Naive thymus-derived CD4-positive, alpha-beta T cell (primary cell): ENCODE measurements at regions of chr2 and their contacts with region 1.

Region 1: DNA sequence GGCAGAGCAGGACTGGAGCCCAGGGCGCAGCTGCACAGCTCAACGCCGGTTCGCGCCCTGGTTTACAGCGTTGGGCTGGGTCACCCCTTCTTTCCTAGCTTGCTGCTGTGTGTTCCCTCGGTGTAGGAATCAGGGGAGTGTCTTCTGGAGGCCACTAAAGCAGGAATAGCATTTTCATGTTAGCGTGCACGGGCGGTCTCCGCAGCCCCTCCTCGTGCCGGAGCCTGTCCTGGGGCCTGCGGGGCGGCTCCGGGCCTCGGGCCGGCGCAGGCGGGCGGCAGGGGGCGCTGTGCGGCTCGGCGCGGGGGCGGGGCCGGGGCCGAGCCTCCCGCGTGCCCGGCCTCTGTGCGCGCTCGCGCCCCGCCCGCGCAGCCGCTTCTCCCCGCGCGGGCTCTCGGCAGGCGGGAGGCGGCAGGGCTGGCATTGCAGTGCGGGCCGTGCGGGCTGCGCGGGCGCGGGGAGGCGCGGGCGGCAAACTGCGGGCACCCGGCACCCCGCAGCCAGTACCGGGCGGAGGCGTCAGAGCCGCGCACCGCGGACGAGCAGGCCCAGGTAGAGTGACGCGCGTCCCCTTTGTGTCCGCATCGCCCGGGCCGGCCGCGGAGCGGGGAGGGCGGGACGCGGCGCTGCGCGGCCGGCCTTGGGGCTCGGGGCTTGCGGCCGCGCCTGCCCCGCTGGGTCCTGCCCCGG is at the start of gene RNF144A:
- DNase-seq: peak; percentile 63 to 91 (median 79)
- ATAC-seq: peak; percentile 95
- H3K4me3 ChIP-seq: peak within 1 kb of the TSS; percentile 61
- H3K4me3 Mint-ChIP-seq: peak within 1 kb of the TSS; percentile 78 to 87 (median 80)
- H3K27ac ChIP-seq: peak within 1 kb of the TSS; percentile 76
- H3K27ac Mint-ChIP-seq: peak within 1 kb of the TSS; percentile 20 to 99 (median 78)
- H3K4me1 ChIP-seq: peaks cover 25 to 80% of the 10 kb centered on the region in 2 donors
- H3K4me1 Mint-ChIP-seq: peaks cover 41 to 84% (median 77%) of the 10 kb centered on the region in 7 donors
- H3K27me3 ChIP-seq: no peaks in the 10 kb centered on the region
- H3K27me3 Mint-ChIP-seq: peaks cover 0 to 18% (median 0%) of the 10 kb centered on the region in 5 donors
- total RNA-seq, gene RNF144A: 40.0 to 74.4 (median 61.2) TPM

Region 2: DNA sequence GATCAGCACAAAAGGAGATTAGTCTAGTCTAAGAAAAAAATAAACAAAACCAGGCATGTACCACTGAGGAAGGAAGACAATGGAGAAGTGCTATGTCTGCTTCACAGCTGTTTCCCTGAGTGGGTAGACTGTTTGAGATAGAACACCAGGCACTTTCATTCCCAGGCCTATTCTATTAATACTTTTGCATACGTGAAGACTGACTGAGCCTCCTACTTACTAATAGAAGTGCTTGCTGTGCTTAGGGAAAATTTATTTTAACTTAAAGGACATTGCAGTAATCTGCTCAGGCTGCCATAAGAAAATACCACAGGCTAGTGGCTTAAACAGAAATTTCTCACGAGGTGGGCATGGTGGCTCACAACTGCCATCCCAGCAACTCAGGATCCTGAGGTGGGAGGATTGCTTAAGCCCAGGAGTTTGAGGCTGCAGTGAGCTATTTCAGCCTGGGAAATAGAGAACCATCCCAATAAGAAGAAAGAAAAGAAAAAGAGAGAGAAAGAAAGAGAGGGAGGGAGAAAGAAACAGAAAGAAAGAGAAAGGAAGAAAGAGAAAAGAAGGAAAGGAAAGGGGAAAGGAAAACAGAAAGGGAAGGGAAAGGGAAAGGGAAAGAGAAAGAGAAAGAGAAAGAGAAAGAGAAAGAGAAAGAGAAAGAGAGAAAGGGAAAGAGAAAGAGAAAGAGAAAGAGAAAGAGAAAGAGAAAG is 84.5 kb before region 1 on chr2:
- CTCF ChIA-PET with region 1: no interaction called
- POLR2A ChIA-PET with region 1: no interaction called
- intact Hi-C with region 1: loop called in 1 of 2 experiments (anchors 2 kb)
- DNase-seq: no peak
- ATAC-seq: no peak
- H3K4me3 ChIP-seq: no peak overlapping the region
- H3K4me3 Mint-ChIP-seq: peak overlapping the region in 1 of 10 donors; percentile 72
- H3K27ac ChIP-seq: no peak overlapping the region
- H3K27ac Mint-ChIP-seq: peak overlapping the region in 6 of 9 donors; percentile 0 to 92 (median 36)
- H3K4me1 ChIP-seq: no peaks in the 10 kb centered on the region
- H3K4me1 Mint-ChIP-seq: peaks cover 0 to 31% (median 7%) of the 10 kb centered on the region in 7 donors
- H3K27me3 ChIP-seq: no peaks in the 10 kb centered on the region
- H3K27me3 Mint-ChIP-seq: no peaks in the 10 kb centered on the region

Region 3: DNA sequence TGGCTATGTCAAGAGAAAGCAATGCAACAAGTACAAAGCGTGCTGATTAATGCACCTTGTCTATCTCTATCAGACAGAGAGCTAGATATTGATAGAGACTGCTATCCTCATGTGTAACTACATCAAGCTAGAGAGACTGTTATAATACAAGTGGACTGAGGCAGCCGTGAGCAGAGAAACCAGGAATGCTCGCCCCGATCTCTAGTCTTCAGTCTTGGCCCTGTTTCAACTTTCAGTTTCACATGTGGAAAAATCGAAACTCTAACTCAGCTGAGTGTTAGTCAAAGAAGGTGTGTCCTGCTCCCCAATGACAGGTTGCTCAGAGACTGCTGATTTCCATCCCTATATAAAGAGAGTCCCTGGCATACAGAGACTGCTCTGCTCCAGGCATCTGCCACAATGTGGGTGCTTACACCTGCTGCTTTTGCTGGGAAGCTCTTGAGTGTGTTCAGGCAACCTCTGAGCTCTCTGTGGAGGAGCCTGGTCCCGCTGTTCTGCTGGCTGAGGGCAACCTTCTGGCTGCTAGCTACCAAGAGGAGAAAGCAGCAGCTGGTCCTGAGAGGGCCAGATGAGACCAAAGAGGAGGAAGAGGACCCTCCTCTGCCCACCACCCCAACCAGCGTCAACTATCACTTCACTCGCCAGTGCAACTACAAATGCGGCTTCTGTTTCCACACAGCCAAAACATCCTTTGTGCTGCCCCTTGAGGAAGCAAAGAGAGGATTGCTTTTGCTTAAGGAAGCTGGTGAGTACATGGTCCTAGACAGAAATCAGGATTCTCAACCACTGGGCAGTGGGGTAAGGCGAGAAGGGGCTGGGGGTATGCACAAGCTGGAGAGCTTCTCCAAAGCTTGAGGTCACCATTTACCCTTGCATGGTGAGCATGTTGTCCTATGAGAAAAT is 39.6 kb before region 1 on chr2 and contains the start of gene RSAD2:
- CTCF ChIA-PET with region 1: interaction called, 3 read pairs
- POLR2A ChIA-PET with region 1: interaction called, 70 read pairs
- intact Hi-C with region 1: no loop called
- DNase-seq: peak in 8 of 9 donors; percentile 29 to 73 (median 64)
- ATAC-seq: peak; percentile 85
- H3K4me3 ChIP-seq: peak within 1 kb of the TSS; percentile 58
- H3K4me3 Mint-ChIP-seq: peak within 1 kb of the TSS; percentile 80 to 97 (median 90)
- H3K27ac ChIP-seq: peak within 1 kb of the TSS; percentile 59
- H3K27ac Mint-ChIP-seq: peak within 1 kb of the TSS; percentile 80 to 98 (median 91)
- H3K4me1 ChIP-seq: peaks cover 20 to 50% of the 10 kb centered on the region in 2 donors
- H3K4me1 Mint-ChIP-seq: peaks cover 36 to 94% (median 78%) of the 10 kb centered on the region in 7 donors
- H3K27me3 ChIP-seq: no peaks in the 10 kb centered on the region
- H3K27me3 Mint-ChIP-seq: no peaks in the 10 kb centered on the region
- total RNA-seq, gene RSAD2: 5.0 to 72.6 (median 5.6) TPM

Region 4: DNA sequence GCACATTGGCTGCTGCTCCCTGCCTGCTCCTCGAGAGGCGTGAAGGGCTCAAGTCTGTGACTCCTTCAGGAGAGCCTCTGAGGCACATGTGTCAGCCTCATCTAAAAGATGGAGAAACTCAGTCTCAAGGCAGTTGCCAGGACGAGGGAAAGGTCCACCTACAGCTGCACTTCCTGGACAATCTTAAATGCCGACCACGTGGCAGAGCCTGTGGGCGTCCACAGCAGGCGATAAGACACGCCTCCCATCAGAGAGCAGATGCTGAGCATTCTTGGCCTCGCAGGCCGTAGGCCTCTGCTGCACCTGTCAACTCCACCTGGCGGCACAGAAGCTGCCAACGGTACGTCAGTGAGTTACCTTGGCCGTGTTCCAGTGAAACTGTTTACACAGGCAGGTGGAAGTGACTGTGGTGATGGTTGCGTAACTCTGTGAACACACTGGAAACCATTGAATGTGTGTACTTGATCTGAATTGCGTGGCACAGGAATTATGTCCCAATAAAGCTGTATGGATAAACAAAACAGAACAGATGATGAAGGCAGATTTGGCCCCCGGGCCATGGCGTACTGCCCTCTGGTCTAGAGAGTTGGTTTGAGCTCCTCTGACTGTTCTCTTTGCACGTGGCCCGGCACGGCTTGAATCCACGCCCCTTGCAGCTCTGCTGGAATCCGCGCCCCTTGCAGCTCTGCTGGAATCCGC is 114.5 kb after region 1 on chr2:
- CTCF ChIA-PET with region 1: interaction called, 5 read pairs
- POLR2A ChIA-PET with region 1: interaction called, 5 read pairs
- intact Hi-C with region 1: loop called in 1 of 2 experiments (anchors 1 kb)
- DNase-seq: peak in 8 of 9 donors; percentile 22 to 83 (median 76)
- ATAC-seq: peak; percentile 93
- H3K4me3 ChIP-seq: no peak overlapping the region
- H3K4me3 Mint-ChIP-seq: peak overlapping the region in 3 of 10 donors; percentile 12 to 56 (median 34)
- H3K27ac ChIP-seq: peak overlapping the region; percentile 59
- H3K27ac Mint-ChIP-seq: peak overlapping the region in 8 of 9 donors; percentile 76 to 94 (median 90)
- H3K4me1 ChIP-seq: peaks cover 0 to 7% of the 10 kb centered on the region in 2 donors
- H3K4me1 Mint-ChIP-seq: peaks cover 12 to 31% (median 21%) of the 10 kb centered on the region in 7 donors
- H3K27me3 ChIP-seq: no peaks in the 10 kb centered on the region
- H3K27me3 Mint-ChIP-seq: no peaks in the 10 kb centered on the region

Region 5: GRCh38 chr2:7044261-7045250 is 127.3 kb after region 1 on chr2:
- CTCF ChIA-PET with region 1: interaction called, 12 read pairs
- POLR2A ChIA-PET with region 1: no interaction called
- intact Hi-C with region 1: loop called in 1 of 2 experiments (anchors 5 kb)
- DNase-seq: peak; percentile 29 to 67 (median 59)
- ATAC-seq: peak; percentile 91
- H3K4me3 ChIP-seq: no peak overlapping the region
- H3K4me3 Mint-ChIP-seq: peak overlapping the region in 1 of 10 donors; percentile 10
- H3K27ac ChIP-seq: no peak overlapping the region
- H3K27ac Mint-ChIP-seq: peak overlapping the region in 8 of 9 donors; percentile 30 to 77 (median 58)
- H3K4me1 ChIP-seq: peaks cover 0 to 4% of the 10 kb centered on the region in 2 donors
- H3K4me1 Mint-ChIP-seq: peaks cover 5 to 54% (median 35%) of the 10 kb centered on the region in 7 donors
- H3K27me3 ChIP-seq: no peaks in the 10 kb centered on the region
- H3K27me3 Mint-ChIP-seq: no peaks in the 10 kb centered on the region

Region 6: GRCh38 chr2:7588295-7588694 is 671.1 kb after region 1 on chr2:
- CTCF ChIA-PET with region 1: no interaction called
- POLR2A ChIA-PET with region 1: no interaction called
- intact Hi-C with region 1: no loop called
- DNase-seq: no peak
- ATAC-seq: no peak
- H3K4me3 ChIP-seq: no peak overlapping the region
- H3K4me3 Mint-ChIP-seq: peak overlapping the region in 1 of 10 donors; percentile 2
- H3K27ac ChIP-seq: no peak overlapping the region
- H3K27ac Mint-ChIP-seq: peak overlapping the region in 1 of 9 donors; percentile 47
- H3K4me1 ChIP-seq: no peaks in the 10 kb centered on the region
- H3K4me1 Mint-ChIP-seq: peaks cover 2 to 19% (median 11%) of the 10 kb centered on the region in 7 donors
- H3K27me3 ChIP-seq: no peaks in the 10 kb centered on the region
- H3K27me3 Mint-ChIP-seq: no peaks in the 10 kb centered on the region

Region 7: DNA sequence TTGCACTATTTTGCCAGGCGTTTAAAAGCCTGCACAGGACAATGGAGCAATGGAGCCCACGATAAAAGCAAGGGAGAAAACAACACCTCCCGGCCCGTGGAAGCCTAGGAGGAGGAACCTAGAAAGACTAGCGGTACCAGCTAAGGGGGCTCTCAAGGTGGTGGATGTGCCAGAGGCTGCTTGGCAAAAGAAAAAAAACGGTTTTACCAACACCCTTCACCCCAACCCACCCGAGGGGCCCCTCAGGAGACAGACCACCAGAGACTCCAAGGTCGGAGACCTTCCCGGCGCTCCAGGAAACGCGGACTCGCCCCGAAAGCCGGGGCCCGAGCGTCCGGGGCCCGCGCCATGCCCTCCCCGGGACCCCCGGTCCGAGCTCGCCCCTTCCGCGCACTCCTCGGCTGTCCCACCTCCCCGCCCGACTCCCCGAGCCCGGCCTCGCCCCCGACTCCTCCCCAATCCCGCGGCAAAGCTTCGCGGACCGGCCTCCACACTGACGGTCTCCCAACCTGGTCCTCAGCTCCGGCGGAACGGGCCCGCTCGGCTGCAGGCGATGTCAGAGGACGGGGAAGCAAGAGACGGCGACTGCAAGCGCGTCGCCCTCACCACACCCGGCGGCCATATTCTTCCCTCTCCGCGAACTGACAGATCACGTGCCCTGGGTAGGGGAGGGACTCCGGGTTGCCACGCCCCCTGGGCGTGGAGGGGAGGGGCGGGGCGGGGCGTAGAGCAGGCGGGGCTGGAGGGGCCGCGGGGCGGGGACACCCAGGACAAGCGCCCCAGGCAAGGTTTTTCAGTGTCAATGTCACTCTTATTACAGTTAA is 1920.0 kb after region 1 on chr2 and contains the start of gene KIDINS220:
- CTCF ChIA-PET with region 1: no interaction called
- POLR2A ChIA-PET with region 1: no interaction called
- intact Hi-C with region 1: loop called in 1 of 2 experiments (anchors 1 kb)
- DNase-seq: peak; percentile 71 to 87 (median 82)
- ATAC-seq: peak; percentile 99
- H3K4me3 ChIP-seq: peak within 1 kb of the TSS; percentile 69
- H3K4me3 Mint-ChIP-seq: peak within 1 kb of the TSS; percentile 96 to 100 (median 99)
- H3K27ac ChIP-seq: peak within 1 kb of the TSS; percentile 78
- H3K27ac Mint-ChIP-seq: peak within 1 kb of the TSS; percentile 94 to 100 (median 98)
- H3K4me1 ChIP-seq: peaks cover 23 to 29% of the 10 kb centered on the region in 2 donors
- H3K4me1 Mint-ChIP-seq: peaks cover 26 to 60% (median 51%) of the 10 kb centered on the region in 7 donors
- H3K27me3 ChIP-seq: no peaks in the 10 kb centered on the region
- H3K27me3 Mint-ChIP-seq: peaks cover 0 to 5% (median 0%) of the 10 kb centered on the region in 5 donors
- total RNA-seq, gene KIDINS220: 34.5 to 54.3 (median 48.3) TPM